ENCODE measurements at regions of chr6 and their contacts with region 1.

Region 1: DNA sequence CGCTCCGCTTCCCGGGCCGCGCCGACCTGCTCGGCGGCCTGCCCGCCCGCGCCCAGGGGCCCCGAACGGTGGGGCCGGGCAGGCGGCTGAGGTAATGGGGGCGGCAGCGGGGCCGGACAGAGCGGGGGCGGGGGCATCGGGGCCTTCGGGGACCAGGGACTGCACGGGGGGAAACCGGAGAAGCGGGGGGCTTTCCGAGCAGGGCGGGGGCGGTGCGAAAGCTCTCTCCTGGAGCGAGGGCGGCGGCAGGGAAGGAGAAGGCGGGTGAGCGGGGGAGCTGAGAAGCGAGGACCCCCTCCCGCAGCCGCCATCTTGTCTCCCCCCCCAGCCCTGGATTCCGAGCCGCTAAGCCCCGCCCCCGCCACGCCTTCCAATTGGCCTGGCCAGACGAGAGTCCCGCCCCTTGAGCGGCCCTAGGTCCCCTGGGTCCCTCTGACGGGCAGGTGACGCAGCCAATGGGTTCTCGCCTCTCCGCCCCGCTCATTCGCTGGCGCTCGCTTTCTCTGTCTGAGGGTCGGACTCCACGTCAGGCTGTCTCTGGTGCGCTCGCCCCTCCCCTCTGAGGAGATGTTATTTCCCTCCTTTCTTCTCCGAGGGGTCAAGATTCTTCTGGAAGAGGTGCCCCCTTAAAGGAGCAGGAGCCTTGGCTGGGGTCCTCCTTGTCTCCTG is 470 bp downstream of the BRPF3 start:
- DNase-seq: peak; percentile 99
- H3K4me3 Mint-ChIP-seq: peak overlapping the region; percentile 89
- H3K27ac Mint-ChIP-seq: peak overlapping the region; percentile 87
- H3K4me1 Mint-ChIP-seq: peaks cover 40% of the 10 kb centered on the region
- H3K27me3 Mint-ChIP-seq: peaks cover 3% of the 10 kb centered on the region

Region 2: DNA sequence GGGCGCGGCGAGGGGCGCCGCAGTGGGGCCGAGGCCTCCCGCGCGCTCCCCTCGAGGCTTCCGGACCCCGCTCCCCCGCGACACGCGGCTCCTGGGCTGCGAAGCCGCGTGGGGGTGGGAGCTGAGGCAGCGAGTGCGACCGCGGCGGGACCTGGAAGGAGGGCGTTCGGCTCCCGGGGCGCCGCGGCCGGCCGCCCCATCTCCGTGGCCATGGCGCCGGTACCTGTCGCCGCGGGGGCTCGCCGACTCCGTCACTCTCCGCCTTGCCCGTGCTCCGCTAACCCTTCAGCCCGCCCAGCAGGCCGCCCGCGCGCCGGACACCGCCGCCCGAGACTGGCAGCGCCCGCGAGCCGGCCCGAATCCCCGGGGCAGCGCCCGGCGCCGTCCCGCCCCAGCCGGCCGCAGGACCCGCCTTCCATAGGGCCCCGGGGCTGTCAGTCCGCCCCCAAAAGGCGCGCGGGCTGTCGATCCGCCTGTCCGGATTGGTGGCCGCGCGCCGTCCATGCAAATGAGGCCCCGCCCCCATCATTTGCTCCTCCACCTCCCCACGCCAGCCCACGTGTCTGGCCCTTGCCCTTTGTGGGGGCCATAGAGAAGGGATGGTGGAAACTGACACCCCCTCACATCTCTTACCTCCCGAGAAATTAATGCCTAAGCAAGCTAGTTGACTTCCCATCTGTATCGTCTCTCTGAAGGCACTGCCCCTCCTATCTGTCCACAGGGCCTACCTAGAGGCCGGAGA is 508.3 kb before region 1 on chr6 and contains the start of gene FKBP5:
- intact Hi-C with region 1: loop called (anchors 10 kb)
- DNase-seq: peak; percentile 87
- H3K4me3 Mint-ChIP-seq: peak within 1 kb of the TSS; percentile 97
- H3K27ac Mint-ChIP-seq: peak within 1 kb of the TSS; percentile 95
- H3K4me1 Mint-ChIP-seq: peaks cover 24% of the 10 kb centered on the region
- H3K27me3 Mint-ChIP-seq: peaks cover 2% of the 10 kb centered on the region
- total RNA-seq, gene FKBP5: 60.9 and 62.4 TPM in 2 replicates

Region 3: DNA sequence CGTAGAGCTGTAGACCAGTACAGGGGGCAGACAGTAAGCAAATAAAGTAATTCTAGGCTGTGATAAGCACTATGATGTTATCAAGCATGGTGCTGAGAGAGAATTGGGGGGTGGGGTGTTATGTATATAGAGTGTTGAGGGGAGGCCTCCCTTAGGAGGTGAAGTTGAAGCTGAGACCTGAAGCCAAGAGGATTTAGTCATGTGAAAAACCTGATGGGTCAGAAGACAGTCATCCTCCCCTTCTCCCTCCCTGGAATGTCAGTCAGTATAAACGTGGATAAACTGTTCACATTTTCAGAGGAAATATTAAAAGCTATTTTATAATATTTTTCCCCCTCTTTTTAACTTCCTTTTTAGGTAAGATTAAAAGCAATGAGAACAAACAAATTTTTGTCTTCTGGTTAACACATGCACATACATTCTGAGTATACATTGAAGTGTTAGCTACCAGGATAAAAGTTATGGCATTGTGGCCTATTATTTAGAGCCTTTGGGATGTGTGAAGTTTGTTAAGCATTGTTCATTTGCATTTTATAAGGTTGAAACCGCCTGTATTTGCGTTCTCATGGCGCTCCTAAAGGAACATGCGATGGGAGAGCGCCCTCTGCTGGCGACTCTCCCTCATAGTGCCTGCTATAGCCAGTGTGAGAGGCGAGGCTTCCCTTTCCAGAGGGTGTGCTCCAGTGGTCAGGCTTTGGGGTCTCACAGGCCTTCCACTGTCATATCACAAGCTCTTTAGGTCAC is 102.1 kb before region 1 on chr6:
- intact Hi-C with region 1: loop called (anchors 1 kb)
- DNase-seq: peak; percentile 67
- H3K4me3 Mint-ChIP-seq: no peak overlapping the region
- H3K27ac Mint-ChIP-seq: peak overlapping the region; percentile 47
- H3K4me1 Mint-ChIP-seq: peaks cover 30% of the 10 kb centered on the region
- H3K27me3 Mint-ChIP-seq: no peaks in the 10 kb centered on the region

Region 4: DNA sequence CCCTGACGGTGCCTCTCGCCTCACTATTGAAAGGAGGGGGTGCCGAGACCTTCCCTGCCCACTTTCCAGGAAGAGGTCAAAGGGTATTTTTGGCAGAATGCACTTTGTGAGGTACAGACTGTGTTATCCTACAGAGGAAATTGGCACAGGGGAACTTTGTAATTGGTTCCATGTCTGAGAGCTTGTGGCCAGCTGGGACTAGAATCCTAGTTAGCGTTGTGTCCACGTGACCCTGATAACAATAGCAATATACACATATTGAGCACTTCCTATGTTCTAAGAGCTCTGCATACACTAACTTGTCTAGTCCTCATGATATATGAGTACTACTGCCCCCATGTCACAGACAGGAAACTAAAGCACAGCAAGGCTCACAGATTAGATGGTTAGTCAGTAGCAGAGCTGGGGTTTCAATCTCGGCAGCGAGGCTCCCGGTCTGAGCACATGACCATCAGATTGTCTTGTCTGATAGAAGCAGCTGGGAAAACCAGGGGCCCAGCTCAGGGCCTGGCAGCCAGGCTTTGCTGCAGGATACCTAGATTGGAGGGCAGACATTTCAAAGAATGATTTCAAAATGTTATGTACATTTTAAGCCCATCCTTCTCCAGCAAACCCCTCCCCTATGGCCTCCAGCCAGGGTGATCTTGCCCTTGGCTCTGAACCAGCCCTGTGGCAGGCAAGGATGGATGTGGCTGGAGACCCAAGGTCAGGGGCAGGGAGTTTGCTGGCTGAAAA is 65.3 kb before region 1 on chr6:
- intact Hi-C with region 1: loop called (anchors 1 kb)
- DNase-seq: peak; percentile 37
- H3K4me3 Mint-ChIP-seq: peak overlapping the region; percentile 85
- H3K27ac Mint-ChIP-seq: peak overlapping the region; percentile 92
- H3K4me1 Mint-ChIP-seq: peaks cover 50% of the 10 kb centered on the region
- H3K27me3 Mint-ChIP-seq: no peaks in the 10 kb centered on the region

Region 5: GRCh38 chr6:36241728-36242127 is 44.7 kb after region 1 on chr6:
- intact Hi-C with region 1: loop called (anchors 1 kb)
- DNase-seq: no peak
- H3K4me3 Mint-ChIP-seq: no peak overlapping the region
- H3K27ac Mint-ChIP-seq: no peak overlapping the region
- H3K4me1 Mint-ChIP-seq: peaks cover 12% of the 10 kb centered on the region
- H3K27me3 Mint-ChIP-seq: peaks cover 23% of the 10 kb centered on the region